PC-3 (cell line): ENCODE measurements at regions of chr5 and their contacts with region 1.

Region 1: GRCh38 chr5:151298063-151298855 is 5.3 kb downstream of the SLC36A3 start:
- DNase-seq: peak; percentile 78
- ATAC-seq: peak; percentile 53
- H3K4me3 ChIP-seq: no peak overlapping the region
- H3K27ac ChIP-seq: no peak overlapping the region
- H3K4me1 ChIP-seq: peaks cover 35% of the 10 kb centered on the region
- H3K27me3 ChIP-seq: no peaks in the 10 kb centered on the region
- CTCF ChIP-seq: peak; percentile 77

Region 2: DNA sequence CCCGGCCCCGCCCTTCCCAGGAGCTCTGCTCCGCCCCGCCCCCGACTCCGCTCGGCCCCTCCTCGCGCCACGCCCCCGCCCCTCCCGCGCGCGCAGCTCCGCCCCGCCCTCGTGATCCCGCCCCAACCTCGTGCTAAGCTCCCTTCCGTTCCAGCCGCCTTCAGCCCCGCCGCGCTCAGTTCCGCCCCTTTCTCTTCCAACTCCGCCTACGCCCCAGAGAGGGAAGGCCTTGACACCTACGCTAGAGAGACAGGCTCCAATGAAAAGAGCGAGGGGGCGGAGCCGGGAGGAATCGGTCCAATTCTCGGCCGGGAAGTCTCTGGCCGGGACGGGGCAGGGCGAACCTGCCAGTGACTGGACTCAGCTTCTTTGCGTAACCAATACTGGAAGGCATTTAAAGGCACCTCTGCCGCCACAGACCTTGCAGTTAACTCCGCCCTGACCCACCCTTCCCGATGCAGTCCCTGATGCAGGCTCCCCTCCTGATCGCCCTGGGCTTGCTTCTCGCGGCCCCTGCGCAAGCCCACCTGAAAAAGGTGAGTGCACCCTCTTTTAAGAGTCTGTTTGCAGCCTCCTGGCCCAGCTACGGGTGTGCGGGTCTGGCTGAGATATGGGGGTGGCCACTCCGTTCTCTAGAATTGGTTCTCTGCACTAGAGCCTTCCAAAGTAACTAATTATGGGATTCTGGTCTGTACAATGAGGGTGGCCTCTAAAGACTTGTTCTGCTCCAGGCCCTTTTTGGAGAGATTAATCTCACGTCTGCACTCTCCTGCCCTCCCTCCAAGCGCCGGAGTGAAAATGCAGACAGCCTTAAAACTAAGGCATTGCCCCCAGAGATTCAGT is 45.3 kb before region 1 on chr5 and contains the start of gene GM2A:
- CTCF ChIA-PET with region 1: interaction called, 18 read pairs
- POLR2A ChIA-PET with region 1: no interaction called
- intact Hi-C with region 1: loop called (anchors 2 kb)
- DNase-seq: peak; percentile 99
- ATAC-seq: peak; percentile 94
- H3K4me3 ChIP-seq: peak within 1 kb of the TSS; percentile 95
- H3K27ac ChIP-seq: peak within 1 kb of the TSS; percentile 25
- H3K4me1 ChIP-seq: peaks cover 32% of the 10 kb centered on the region
- H3K27me3 ChIP-seq: no peaks in the 10 kb centered on the region
- CTCF ChIP-seq: no peak
- total RNA-seq, gene GM2A: 78.3 and 90.2 TPM in 2 replicates

Region 3: GRCh38 chr5:152701305-152701949 is 1403.2 kb after region 1 on chr5:
- CTCF ChIA-PET with region 1: interaction called, 16 read pairs
- POLR2A ChIA-PET with region 1: no interaction called
- intact Hi-C with region 1: no loop called
- DNase-seq: no peak
- ATAC-seq: no peak
- H3K4me3 ChIP-seq: no peak overlapping the region
- H3K27ac ChIP-seq: no peak overlapping the region
- H3K4me1 ChIP-seq: no peaks in the 10 kb centered on the region
- H3K27me3 ChIP-seq: no peaks in the 10 kb centered on the region
- CTCF ChIP-seq: no peak